Uterus (tissue), 4 donors: ENCODE measurements at regions of chr3 and their contacts with region 1.

Region 1: GRCh38 chr3:42961633-42962032 is 17.5 kb upstream of the GASK1A start:
- DNase-seq: peak; percentile 54 to 69
- H3K4me3 ChIP-seq: no peak overlapping the region
- H3K27ac ChIP-seq: no peak overlapping the region
- H3K4me1 ChIP-seq: no peaks in the 10 kb centered on the region
- H3K27me3 ChIP-seq: no peaks in the 10 kb centered on the region
- CTCF ChIP-seq: peak; percentile 71 to 81 (median 78)
- POLR2A ChIP-seq: no peak

Region 2: DNA sequence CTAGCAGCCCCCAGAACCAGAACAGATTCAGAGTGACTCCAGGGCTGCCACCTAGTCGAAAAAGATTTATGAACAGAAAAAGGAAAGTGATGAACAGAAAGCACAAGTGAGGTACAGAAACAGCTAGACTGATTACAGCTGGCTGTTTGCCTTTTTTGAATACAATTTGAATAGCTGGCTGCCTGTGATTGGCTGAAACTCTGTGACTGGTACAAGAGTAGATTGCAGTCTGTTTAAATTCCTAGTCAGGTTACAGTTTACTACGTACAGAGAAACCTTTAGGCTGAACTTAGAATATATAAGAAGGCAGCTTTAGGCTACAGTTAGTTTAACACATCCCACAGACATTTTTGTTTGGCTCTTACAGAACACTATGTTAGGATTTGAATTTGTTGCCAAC is 198.6 kb before region 1 on chr3:
- intact Hi-C with region 1: no loop called
- DNase-seq: no peak
- H3K4me3 ChIP-seq: no peak overlapping the region
- H3K27ac ChIP-seq: no peak overlapping the region
- H3K4me1 ChIP-seq: no peaks in the 10 kb centered on the region
- H3K27me3 ChIP-seq: no peaks in the 10 kb centered on the region
- CTCF ChIP-seq: no peak
- POLR2A ChIP-seq: no peak

Region 3: DNA sequence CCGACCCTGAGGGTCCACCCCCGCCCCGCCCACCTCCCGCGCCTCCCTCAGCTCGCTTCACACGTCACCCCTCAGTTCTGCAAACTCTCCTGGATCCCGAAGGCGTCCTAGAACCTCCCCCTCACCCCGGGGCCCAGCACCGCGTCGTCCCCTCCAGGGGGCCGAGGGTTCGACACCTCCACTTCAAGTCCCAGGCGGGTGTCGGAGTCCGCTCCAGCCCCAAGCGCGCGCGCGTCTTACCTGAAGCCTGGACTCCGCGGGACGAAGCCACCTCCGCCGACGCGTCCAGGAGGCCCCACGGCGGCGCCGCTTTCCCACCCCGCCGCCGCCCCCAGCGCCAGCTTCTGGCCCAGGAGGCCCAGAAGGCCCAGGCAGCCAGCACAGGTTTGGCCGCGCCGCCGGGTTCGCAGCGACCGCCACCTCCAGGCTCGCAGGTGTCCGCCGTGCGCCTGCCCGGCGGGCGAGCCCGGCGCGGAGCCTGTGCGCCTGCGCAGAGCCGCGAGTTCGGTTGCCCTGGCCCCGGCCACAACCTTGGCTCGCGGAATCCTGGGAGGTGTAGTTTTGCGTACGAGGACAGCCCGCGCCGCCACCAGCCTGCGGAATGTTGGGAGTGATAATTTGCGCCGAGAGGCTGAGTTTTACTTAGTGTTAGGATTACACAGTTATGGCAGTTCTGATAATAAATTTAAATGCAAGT is 144.1 kb after region 1 on chr3 and contains the start of gene POMGNT2:
- intact Hi-C with region 1: loop called (anchors 10 kb)
- DNase-seq: peak; percentile 89
- H3K4me3 ChIP-seq: peak within 1 kb of the TSS; percentile 83 to 92
- H3K27ac ChIP-seq: peak within 1 kb of the TSS; percentile 96
- H3K4me1 ChIP-seq: peaks cover 0 to 3% of the 10 kb centered on the region in 2 donors
- H3K27me3 ChIP-seq: no peaks in the 10 kb centered on the region
- CTCF ChIP-seq: peak in 2 of 4 experiments; percentile 6 to 17
- POLR2A ChIP-seq: peak; percentile 71 to 93
- total RNA-seq, gene POMGNT2: 17.6 to 103 (median 57.7) TPM

Region 4: DNA sequence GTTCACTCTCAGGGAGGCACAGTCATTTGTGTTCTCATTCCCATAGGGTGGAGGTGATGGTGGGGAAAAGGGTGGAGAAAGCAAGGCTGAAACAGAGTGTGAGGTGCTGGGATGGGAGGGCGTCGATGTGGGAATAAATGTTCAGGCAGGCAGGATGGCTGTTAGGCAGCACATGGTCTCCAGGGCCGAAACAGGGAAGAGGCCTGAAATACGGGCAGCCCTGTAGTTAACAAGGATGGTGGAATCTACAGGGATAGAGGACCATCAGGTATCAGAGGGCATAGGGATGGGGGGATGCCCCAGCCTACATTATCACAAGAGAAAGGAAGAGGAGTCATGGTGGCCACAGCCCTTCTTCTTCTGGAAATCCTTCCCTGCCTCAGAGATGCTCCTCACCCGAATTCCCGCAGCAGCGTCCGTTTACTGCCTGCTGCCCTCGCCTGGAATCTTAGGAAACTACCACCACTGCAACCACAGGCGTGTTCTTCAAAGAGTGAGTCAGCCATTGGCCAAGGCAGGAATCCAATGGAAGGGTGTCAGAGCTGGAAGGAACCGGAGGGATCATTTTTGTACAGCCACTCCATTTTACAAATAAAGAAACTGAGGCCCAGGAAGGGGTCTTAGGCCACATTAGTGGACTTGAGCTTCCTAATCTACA is 194.0 kb after region 1 on chr3:
- intact Hi-C with region 1: loop called (anchors 5 kb)
- DNase-seq: peak; percentile 78 to 82
- H3K4me3 ChIP-seq: no peak overlapping the region
- H3K27ac ChIP-seq: peak overlapping the region in 1 of 2 donors; percentile 73
- H3K4me1 ChIP-seq: peaks cover 0 to 4% of the 10 kb centered on the region in 2 donors
- H3K27me3 ChIP-seq: no peaks in the 10 kb centered on the region
- CTCF ChIP-seq: peak; percentile 58 to 72 (median 62)
- POLR2A ChIP-seq: no peak